Transverse colon (tissue), 4 donors: ENCODE measurements at regions of chr5 and their contacts with region 1.

Region 1: DNA sequence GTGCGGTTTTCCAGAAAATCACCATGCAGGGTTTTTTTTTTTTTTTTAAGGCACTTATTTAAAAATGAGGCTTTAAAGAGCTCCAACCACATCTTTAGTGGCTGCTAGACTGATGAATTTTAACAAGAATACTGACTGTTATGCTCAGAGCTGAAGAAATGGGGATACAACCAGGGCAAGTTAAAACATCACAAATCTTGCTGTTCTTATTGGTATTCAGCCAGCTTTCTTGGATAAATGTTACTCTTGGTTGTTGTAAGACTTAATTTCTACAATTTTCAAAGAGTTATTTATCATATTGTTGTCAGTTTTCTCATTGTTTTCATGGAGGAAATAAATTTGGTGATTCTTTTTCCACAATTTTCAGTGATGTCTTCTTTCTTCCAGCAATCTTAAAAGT is 352.8 kb upstream of the FAM174A start:
- DNase-seq: no peak
- H3K4me3 ChIP-seq: no peak overlapping the region
- H3K27ac ChIP-seq: no peak overlapping the region
- H3K4me1 ChIP-seq: no peaks in the 10 kb centered on the region
- H3K27me3 ChIP-seq: no peaks in the 10 kb centered on the region
- CTCF ChIP-seq: no peak
- EP300 ChIP-seq: no peak
- POLR2A ChIP-seq: no peak

Region 2: DNA sequence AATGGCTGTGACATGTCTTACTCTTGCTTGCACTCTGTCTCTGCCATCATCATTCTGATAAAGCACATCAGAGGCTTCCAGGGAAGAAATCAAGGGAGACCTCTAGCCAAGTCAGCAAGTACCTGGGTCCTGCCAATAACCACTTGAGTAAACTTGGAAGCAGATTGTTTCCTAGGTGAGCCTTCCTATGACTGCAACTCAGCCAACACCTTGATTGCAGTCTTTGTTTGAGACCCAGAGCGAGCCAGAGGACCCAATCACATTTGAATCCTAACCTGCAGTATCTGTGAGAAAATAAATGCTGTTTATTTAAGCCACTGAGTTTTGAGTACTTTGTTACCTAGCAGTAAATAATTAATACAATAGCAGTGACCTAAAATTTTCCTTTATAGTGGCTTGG is 896.8 kb before region 1 on chr5:
- in situ Hi-C with region 1: no loop called
- intact Hi-C with region 1: loop called (anchors 5 kb)
- DNase-seq: no peak
- H3K4me3 ChIP-seq: no peak overlapping the region
- H3K27ac ChIP-seq: no peak overlapping the region
- H3K4me1 ChIP-seq: no peaks in the 10 kb centered on the region
- H3K27me3 ChIP-seq: no peaks in the 10 kb centered on the region
- CTCF ChIP-seq: no peak
- EP300 ChIP-seq: no peak
- POLR2A ChIP-seq: no peak

Region 3: DNA sequence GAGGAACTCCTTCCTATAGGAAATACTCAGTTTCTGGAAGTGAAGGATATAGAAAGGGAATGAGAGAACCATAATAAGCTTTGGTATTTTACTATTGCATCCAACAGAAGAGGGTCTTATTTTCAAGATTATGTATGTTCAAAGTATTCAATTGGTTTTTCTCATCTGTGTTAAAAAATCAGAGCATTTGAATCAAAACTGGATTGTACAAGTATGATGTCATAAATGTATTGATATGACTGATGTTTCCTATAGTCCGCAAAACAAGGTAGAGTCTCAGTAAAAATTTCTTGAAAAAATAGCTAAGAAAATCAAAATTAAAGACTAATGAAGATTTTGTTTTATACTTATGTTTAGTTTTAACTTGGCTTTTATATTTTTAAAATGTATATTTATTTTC is 31.1 kb after region 1 on chr5:
- in situ Hi-C with region 1: no loop called
- intact Hi-C with region 1: no loop called
- DNase-seq: no peak
- H3K4me3 ChIP-seq: no peak overlapping the region
- H3K27ac ChIP-seq: no peak overlapping the region
- H3K4me1 ChIP-seq: no peaks in the 10 kb centered on the region
- H3K27me3 ChIP-seq: no peaks in the 10 kb centered on the region
- CTCF ChIP-seq: no peak
- EP300 ChIP-seq: no peak
- POLR2A ChIP-seq: no peak

Region 4: GRCh38 chr5:100275631-100276030 is 93.2 kb after region 1 on chr5:
- in situ Hi-C with region 1: no loop called
- intact Hi-C with region 1: no loop called
- DNase-seq: no peak
- H3K4me3 ChIP-seq: no peak overlapping the region
- H3K27ac ChIP-seq: no peak overlapping the region
- H3K4me1 ChIP-seq: no peaks in the 10 kb centered on the region
- H3K27me3 ChIP-seq: no peaks in the 10 kb centered on the region
- CTCF ChIP-seq: no peak
- EP300 ChIP-seq: no peak
- POLR2A ChIP-seq: no peak